H1 (cell line): ENCODE measurements at regions of chr6 and their contacts with region 1.

Region 1: DNA sequence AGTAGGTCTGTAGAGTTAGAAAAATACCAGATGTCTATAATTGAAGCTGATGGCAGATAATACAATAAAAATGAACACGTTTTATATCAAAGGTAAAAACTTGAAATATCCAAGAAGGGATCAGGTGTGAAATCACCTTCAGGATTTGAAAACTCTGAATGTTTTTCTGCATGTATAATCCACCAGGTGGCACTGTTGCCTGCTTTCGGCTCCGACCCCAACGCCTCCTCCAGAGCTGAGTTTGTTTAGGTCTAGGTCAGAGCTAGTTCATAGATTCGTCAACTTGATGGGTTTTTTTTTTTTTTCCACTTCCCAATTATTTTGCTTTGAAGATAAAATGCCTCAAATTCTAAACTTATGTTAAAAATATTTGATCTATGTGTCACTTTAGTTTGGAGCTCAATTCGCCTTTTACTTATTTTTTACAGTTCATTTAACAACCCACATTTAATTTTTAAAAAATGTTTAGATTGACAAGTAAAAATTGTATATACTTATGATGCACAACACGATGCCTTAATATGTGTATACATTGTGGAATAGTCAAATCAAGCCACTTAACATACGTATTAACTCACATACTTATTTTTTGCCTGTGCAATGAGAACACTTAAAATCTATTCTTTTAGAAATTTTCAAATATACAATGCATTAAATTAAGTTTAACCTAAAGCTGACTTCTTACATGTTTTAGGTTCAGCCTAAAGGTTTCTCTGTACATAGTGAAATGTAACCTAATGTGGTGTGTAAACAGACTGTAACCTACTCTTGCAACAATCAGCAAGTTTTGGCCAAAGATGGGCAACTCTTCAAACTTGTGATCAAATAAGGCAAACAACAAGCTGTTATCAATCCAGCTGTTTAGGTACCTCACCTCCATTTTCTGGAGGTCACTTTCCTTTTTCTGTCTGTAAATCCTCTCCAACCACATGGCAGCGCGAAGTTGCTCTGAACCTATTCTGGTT is 39.4 kb upstream of the ENPP4 start:
- DNase-seq: peak in 1 of 2 experiments; percentile 53
- H3K4me3 ChIP-seq: no peak overlapping the region
- H3K27ac ChIP-seq: no peak overlapping the region
- H3K4me1 ChIP-seq: no peaks in the 10 kb centered on the region
- H3K27me3 ChIP-seq: no peaks in the 10 kb centered on the region; a peak in 1 of 7 replicates
- CTCF ChIP-seq: peak; percentile 64 to 76 (median 72)
- EP300 ChIP-seq: no peak
- POLR2A ChIP-seq: no peak
- RAD21 ChIP-seq: peak; percentile 91 to 93

Region 2: DNA sequence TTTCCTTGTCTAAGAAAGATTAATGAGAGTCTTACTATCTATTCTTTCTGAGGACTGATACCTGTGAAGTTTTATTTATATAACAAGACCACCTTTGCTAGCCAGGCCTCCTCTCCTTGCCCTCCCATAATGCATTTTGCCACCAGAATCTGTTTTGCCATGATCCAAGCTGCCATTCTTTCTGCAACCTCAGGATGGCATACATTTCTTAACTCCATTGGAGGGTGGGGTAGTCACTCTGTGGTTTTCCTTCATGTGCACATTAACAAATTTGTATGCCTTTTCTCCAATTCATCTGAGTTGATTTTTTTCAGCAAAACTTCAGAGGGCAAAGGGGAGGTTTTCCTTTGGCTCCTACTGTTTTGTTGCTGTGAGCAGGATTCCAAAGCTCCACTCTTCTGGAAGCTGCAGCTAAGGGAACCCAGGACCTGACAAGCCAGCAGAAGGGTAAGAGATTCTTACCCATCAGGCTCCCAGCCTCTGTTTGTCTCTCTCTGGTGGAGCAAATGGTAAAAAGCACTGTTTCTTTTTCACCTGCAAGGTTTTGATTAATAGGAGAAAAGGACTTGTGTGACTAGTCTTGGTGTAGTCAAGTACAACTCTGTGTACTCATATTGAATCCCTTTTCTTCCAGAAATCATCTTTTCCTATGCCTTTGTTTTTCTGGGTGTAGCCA is 13.2 kb after region 1 on chr6:
- CTCF ChIA-PET with region 1: interaction called, 20 read pairs
- POLR2A ChIA-PET with region 1: no interaction called
- DNase-seq: no peak
- H3K4me3 ChIP-seq: no peak overlapping the region
- H3K27ac ChIP-seq: no peak overlapping the region
- H3K4me1 ChIP-seq: no peaks in the 10 kb centered on the region
- H3K27me3 ChIP-seq: no peaks in the 10 kb centered on the region
- CTCF ChIP-seq: peak in 1 of 3 experiments; percentile 32; a peak in 1 of 4 replicates
- EP300 ChIP-seq: no peak
- POLR2A ChIP-seq: no peak
- RAD21 ChIP-seq: peak; percentile 26 to 38; a peak in 3 of 4 replicates

Region 3: GRCh38 chr6:46160102-46160501 is 69.7 kb after region 1 on chr6:
- CTCF ChIA-PET with region 1: no interaction called
- POLR2A ChIA-PET with region 1: no interaction called
- DNase-seq: no peak
- H3K4me3 ChIP-seq: no peak overlapping the region
- H3K27ac ChIP-seq: no peak overlapping the region
- H3K4me1 ChIP-seq: no peaks in the 10 kb centered on the region
- H3K27me3 ChIP-seq: no peaks in the 10 kb centered on the region
- CTCF ChIP-seq: no peak
- EP300 ChIP-seq: no peak
- POLR2A ChIP-seq: no peak
- RAD21 ChIP-seq: no peak

Region 4: DNA sequence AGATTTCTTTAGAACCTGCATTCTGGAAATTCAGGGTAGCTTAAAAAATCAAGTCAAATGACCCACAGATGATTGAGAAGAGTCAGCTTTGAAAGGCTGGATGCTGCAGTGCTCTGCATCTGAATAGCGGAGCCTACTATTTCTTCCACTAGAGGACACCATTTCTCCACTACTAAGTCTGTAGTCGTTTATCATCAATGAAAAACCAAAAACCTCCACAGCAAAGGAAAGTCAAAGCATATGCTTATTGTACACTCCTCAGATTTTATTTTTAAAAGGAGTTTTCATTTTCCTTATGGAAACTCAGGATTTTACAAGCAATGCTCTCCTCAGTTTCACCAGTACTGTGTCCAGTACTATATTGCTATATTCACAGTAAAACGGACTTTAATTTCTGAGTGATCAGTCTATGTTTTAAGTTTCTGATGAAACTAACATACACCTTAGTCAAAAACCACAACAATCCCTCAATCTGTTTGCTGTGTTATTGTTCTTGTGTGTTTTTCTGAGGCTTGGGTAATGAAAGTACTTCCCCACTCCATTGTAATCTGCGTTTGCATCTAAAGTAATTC is 130.9 kb after region 1 on chr6:
- CTCF ChIA-PET with region 1: interaction called, 29 read pairs
- POLR2A ChIA-PET with region 1: no interaction called
- DNase-seq: no peak
- H3K4me3 ChIP-seq: no peak overlapping the region
- H3K27ac ChIP-seq: no peak overlapping the region
- H3K4me1 ChIP-seq: no peaks in the 10 kb centered on the region
- H3K27me3 ChIP-seq: no peaks in the 10 kb centered on the region
- CTCF ChIP-seq: peak in 2 of 3 experiments; percentile 80; a peak in 3 of 4 replicates
- EP300 ChIP-seq: no peak
- POLR2A ChIP-seq: no peak
- RAD21 ChIP-seq: peak; percentile 93 to 94